Gastrocnemius medialis (tissue), 4 donors: ENCODE measurements at regions of chr9 and their contacts with region 1.

Region 1: DNA sequence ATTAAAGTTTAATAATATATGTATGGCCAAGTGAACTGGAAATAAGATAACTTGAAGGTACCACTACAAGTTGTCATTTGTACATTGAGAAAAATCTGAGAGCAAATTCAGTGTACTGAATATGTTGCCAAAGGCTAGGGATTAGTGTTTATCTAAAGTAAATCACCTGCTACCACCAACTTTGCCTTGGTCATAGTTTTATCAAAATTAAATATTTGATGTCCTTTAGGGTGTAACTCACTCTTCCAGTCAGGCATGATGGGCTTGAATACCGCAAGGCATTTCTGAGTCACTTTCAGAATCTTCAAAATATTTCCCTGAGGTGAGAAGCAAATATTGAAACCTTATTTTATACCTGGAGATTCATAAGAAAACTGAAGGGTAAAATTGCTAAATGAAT is 1338.7 kb upstream of the ACO1 start:
- DNase-seq: no peak
- ATAC-seq: no peak
- H3K4me3 ChIP-seq: no peak overlapping the region
- H3K27ac ChIP-seq: no peak overlapping the region
- H3K4me1 ChIP-seq: no peaks in the 10 kb centered on the region
- H3K27me3 ChIP-seq: no peaks in the 10 kb centered on the region
- CTCF ChIP-seq: no peak
- POLR2A ChIP-seq: no peak

Region 2: GRCh38 chr9:29816954-29817703 is 1228.7 kb before region 1 on chr9:
- in situ Hi-C with region 1: no loop called
- intact Hi-C with region 1: no loop called
- DNase-seq: no peak
- ATAC-seq: no peak
- H3K4me3 ChIP-seq: no peak overlapping the region
- H3K27ac ChIP-seq: no peak overlapping the region
- H3K4me1 ChIP-seq: no peaks in the 10 kb centered on the region
- H3K27me3 ChIP-seq: no peaks in the 10 kb centered on the region
- CTCF ChIP-seq: no peak
- POLR2A ChIP-seq: no peak

Region 3: GRCh38 chr9:31084350-31084749 is 38.6 kb after region 1 on chr9:
- in situ Hi-C with region 1: no loop called
- intact Hi-C with region 1: no loop called
- DNase-seq: no peak
- ATAC-seq: no peak
- H3K4me3 ChIP-seq: no peak overlapping the region
- H3K27ac ChIP-seq: no peak overlapping the region
- H3K4me1 ChIP-seq: no peaks in the 10 kb centered on the region
- H3K27me3 ChIP-seq: no peaks in the 10 kb centered on the region
- CTCF ChIP-seq: no peak
- POLR2A ChIP-seq: no peak

Region 4: DNA sequence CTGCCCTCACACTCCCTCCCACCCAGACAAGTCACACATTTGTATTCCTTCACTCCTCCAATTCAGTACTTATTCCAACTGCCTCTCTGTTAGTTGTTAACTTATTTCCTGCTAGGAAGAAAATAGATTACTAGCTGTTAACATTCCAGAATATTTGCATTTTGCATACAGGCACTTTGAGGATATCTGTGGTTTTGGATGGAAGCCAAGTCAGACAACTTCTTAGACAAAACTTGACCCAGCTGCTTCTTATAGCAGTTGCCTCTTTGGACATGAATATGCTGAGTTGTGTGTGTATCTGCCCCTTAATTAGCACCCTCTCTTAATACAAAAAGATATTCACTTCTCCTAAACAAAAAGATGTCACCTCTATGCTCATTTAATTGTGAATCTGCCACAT is 58.0 kb after region 1 on chr9:
- in situ Hi-C with region 1: no loop called
- intact Hi-C with region 1: loop called (anchors 10 kb)
- DNase-seq: no peak
- ATAC-seq: no peak
- H3K4me3 ChIP-seq: no peak overlapping the region
- H3K27ac ChIP-seq: no peak overlapping the region
- H3K4me1 ChIP-seq: no peaks in the 10 kb centered on the region
- H3K27me3 ChIP-seq: no peaks in the 10 kb centered on the region
- CTCF ChIP-seq: no peak
- POLR2A ChIP-seq: no peak